ENCODE measurements at regions of chr12 and their contacts with region 1.

Region 1: GRCh38 chr12:5988659-5989116 is 43.6 kb upstream of the ANO2 start:
- DNase-seq: peak in 1 of 2 donors; percentile 79
- H3K4me3 ChIP-seq: no peak overlapping the region
- H3K27ac ChIP-seq: no peak overlapping the region
- H3K4me1 ChIP-seq: no peaks in the 10 kb centered on the region
- H3K27me3 ChIP-seq: no peaks in the 10 kb centered on the region
- CTCF ChIP-seq: peak; percentile 84 to 95 (median 86)
- POLR2A ChIP-seq: no peak

Region 2: GRCh38 chr12:6039894-6040568 is 51.3 kb after region 1 on chr12:
- intact Hi-C with region 1: loop called (anchors 10 kb)
- DNase-seq: no peak
- H3K4me3 ChIP-seq: no peak overlapping the region
- H3K27ac ChIP-seq: no peak overlapping the region
- H3K4me1 ChIP-seq: no peaks in the 10 kb centered on the region
- H3K27me3 ChIP-seq: no peaks in the 10 kb centered on the region
- CTCF ChIP-seq: peak; percentile 65 to 93 (median 91)
- POLR2A ChIP-seq: no peak

Region 3: GRCh38 chr12:6285063-6285477 is 296.4 kb after region 1 on chr12:
- intact Hi-C with region 1: loop called (anchors 5 kb)
- DNase-seq: no peak
- H3K4me3 ChIP-seq: no peak overlapping the region
- H3K27ac ChIP-seq: peak overlapping the region; percentile 20
- H3K4me1 ChIP-seq: peaks cover 9% of the 10 kb centered on the region
- H3K27me3 ChIP-seq: no peaks in the 10 kb centered on the region
- CTCF ChIP-seq: peak; percentile 87 to 95 (median 89)
- POLR2A ChIP-seq: no peak